ENCODE measurements at regions of chr16 and their contacts with region 1.

Region 1: DNA sequence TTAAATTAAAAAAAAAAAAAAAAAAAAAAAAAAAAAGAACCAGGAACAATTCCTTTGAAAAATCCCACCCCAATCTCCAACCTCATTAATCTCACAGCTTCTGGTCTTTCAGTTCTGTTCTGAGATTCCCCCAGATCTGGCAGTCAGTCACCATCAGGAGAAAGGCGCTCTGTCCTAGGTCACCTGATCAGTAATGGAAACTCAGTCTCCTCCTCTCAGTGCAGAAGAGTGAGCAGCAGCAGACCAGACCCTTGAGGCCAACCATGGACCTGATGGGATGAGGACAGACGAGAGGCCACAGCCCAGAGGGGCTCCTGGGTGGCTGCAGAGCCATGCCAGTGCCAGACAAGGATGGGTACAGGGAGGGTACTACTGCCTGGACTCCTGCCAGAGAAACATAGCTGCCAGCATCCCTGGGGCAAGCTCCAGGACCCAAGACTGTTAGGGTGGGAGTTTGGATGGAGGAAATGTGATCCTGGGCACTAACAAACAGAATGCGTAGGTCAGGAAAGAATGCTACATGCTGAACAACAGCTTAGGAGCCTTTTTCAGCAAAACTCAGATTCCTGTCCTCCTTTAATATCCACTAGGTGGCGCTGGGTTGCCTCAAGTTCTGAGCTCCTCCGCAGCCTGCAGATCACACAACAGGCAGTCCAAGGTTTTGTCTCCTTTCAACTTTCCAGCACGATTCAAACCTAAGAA is 28.7 kb downstream of the MPG start:
- DNase-seq: no peak
- H3K4me3 ChIP-seq: no peak overlapping the region
- H3K27me3 ChIP-seq: no peaks in the 10 kb centered on the region
- CTCF ChIP-seq: peak; percentile 82

Region 2: GRCh38 chr16:9903-10665 is 96.7 kb before region 1 on chr16:
- CTCF ChIA-PET with region 1: no interaction called
- POLR2A ChIA-PET with region 1: no interaction called
- DNase-seq: no peak
- H3K4me3 ChIP-seq: peak overlapping the region; percentile 21
- H3K27me3 ChIP-seq: no peaks in the 10 kb centered on the region
- CTCF ChIP-seq: no peak

Region 3: GRCh38 chr16:65671-66137 is 41.1 kb before region 1 on chr16:
- CTCF ChIA-PET with region 1: interaction called, 49 read pairs
- POLR2A ChIA-PET with region 1: no interaction called
- DNase-seq: no peak
- H3K4me3 ChIP-seq: no peak overlapping the region
- H3K27me3 ChIP-seq: no peaks in the 10 kb centered on the region
- CTCF ChIP-seq: peak; percentile 97

Region 4: GRCh38 chr16:91484-91883 is 15.3 kb before region 1 on chr16:
- CTCF ChIA-PET with region 1: interaction called, 56 read pairs
- POLR2A ChIA-PET with region 1: no interaction called
- DNase-seq: no peak
- H3K4me3 ChIP-seq: no peak overlapping the region
- H3K27me3 ChIP-seq: no peaks in the 10 kb centered on the region
- CTCF ChIP-seq: no peak

Region 5: DNA sequence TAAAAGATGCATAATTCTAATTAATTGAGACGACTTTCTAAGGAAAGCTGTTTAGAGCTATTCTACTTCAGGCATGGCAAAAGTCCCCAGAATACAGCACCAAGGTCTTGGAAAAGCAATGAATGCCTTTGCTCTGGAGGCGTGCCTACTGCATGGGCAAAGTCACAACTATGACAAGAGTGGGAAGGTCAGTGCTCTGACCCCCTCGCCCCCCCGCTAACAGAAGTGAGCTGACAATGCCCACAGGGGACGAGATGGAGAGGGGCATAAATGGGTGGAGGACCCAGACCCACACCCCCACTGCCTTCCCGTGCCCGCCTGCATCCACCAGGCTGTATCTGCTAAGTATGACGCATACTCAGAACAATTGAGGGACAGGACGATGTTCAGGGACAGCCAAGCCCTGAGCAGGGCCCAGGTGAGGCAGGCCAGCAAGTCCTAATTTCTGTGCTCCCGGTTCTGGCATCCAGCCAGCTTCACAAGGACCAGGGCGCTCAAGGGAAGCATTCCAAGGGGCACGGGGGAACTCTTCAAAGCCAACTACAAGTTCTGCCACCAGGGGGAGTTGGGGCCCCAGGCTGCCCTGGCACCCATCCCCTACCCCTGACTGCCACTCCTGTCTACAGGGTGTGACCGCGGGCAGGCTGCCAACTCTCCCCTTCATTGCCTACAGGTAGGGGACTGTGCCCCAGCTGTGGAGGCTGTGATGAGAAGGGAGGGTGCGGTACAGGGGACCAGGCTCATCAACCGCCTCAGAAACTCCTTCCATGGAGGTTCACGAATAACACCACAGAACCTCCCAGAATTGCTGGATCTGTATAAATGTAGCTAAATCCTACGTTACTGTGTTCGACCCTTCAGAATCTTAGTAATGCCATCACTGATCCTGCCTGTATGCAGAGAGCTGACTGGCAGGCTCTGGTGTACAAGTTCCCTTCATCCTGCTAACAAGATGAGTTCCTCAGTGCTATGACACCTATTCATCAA is 10.9 kb after region 1 on chr16:
- CTCF ChIA-PET with region 1: interaction called, 45 read pairs
- POLR2A ChIA-PET with region 1: no interaction called
- DNase-seq: no peak
- H3K4me3 ChIP-seq: no peak overlapping the region
- H3K27me3 ChIP-seq: no peaks in the 10 kb centered on the region
- CTCF ChIP-seq: peak; percentile 77

Region 6: DNA sequence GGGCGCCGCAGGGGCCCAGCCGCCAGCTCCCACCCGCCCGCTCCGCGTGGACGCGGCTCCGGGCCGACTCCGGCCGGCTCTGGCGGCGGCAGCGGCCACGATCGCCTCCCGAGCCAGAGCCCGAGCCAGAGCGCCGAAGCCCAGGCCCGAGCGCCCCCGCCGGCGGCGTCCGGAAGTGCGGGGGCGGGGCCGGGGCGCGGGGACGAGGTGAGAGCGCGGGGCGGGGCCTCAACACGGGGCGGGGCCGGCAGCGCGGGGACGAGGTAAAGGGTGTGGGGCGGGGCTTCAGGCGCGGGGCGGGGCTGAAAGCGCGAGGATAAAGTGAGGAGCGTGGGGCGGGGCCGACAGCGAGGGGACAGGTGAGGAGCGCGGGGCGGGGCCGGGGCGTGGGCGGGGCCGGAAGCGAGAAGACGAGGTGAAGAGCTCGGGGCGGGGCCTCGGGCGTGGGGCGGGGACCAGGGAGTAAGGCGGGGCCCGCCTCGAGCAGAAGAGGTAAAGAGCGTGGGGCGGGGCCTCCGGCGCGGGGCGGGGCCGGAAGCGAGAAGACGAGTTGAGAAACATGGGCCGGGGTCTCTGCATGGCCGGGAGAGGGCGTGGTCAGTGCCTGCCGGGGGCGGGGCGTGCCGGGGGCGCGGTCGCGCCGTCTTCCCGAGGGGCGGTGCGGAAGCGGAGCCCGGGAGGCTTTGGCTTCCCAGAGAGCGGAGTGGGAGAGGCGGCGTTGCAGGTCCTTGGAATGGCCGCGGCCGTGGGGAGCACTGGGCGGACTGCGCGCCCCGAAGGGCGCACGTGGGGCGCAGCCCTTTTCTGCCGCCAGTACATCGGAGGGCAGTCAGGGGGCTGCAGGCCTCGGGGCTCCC is 246.0 kb after region 1 on chr16 and contains the start of gene AXIN1:
- CTCF ChIA-PET with region 1: interaction called, 5 read pairs
- POLR2A ChIA-PET with region 1: interaction called, 14 read pairs
- DNase-seq: peak; percentile 50
- H3K4me3 ChIP-seq: peak within 1 kb of the TSS; percentile 68
- H3K27me3 ChIP-seq: no peaks in the 10 kb centered on the region
- CTCF ChIP-seq: no peak
- polyA plus RNA-seq, gene AXIN1: 4.0 and 4.3 TPM in 2 replicates

Region 7: GRCh38 chr16:361872-362701 is 255.3 kb after region 1 on chr16:
- CTCF ChIA-PET with region 1: interaction called, 67 read pairs
- POLR2A ChIA-PET with region 1: no interaction called
- DNase-seq: no peak
- H3K4me3 ChIP-seq: no peak overlapping the region
- H3K27me3 ChIP-seq: no peaks in the 10 kb centered on the region
- CTCF ChIP-seq: peak; percentile 90

Region 8: DNA sequence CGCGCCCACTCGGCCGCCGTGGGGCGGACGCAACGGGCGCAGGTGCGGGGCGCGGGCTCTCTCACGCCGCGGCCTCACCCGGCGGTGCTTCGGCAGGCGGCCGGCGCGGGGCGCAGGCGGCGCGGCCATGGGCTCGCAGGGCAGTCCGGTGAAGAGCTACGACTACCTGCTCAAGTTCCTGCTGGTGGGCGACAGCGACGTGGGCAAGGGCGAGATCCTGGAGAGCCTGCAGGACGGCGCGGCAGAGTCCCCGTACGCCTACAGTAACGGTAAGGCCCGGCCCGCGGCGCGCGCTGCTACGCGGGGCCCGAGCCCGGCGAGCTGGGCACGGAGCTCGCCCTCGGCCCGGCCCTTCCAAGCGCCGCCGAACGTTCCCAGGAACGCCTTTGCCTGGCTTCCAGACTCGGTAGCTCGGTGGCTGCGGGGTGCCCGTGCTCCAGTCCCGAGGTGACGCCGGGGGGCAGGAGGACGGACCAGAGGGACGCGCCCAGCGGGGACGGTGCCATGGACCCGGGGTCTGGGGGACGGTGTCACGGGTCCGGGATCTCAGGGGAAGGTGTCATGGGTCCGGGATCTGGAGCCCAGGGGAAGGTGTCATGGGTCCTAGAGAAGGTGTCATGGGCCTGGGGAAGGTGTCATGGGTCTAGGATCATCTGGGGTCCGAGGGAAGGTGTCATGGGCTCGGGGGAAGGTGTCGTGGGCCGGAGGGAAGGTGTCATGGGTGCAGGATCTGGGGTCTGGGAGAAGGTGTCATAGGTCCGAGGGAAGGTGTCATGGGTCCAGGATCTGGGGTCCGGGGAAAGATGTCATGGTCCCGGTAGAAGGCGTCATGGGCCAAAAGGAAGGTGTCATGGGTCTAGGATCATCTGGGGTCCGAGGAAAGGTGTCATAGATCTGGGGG is 483.6 kb after region 1 on chr16:
- CTCF ChIA-PET with region 1: no interaction called
- POLR2A ChIA-PET with region 1: no interaction called
- DNase-seq: no peak
- H3K4me3 ChIP-seq: peak overlapping the region; percentile 94
- H3K27me3 ChIP-seq: no peaks in the 10 kb centered on the region
- CTCF ChIP-seq: no peak

Measured in BJ (cell line).